Heart right ventricle (tissue), 16 donors: ENCODE measurements at regions of chr1 and their contacts with region 1.

Region 1: DNA sequence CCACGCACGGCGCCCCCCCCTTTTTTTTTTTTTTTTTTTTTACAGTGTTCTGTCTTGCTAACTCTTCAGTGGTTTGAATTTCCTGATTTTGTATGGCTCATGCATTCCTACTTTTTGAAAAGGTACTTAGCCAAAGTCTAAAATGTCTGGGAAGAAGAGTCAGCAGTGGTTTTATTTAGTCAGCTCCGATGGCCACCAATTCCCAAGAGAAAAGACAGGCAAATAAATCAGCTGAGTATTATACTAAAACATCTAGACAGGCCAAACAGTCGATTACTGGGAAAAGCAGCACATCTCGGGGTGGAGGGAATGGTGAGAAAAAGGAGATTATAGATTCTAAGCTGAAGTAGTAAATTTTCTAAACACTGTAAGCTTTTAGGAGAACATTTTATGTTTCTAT is 192.5 kb upstream of the ZRANB2 start:
- DNase-seq: no peak
- ATAC-seq: no peak
- H3K4me3 ChIP-seq: no peak overlapping the region
- H3K27ac ChIP-seq: no peak overlapping the region
- H3K4me1 ChIP-seq: no peaks in the 10 kb centered on the region
- H3K27me3 ChIP-seq: no peaks in the 10 kb centered on the region
- CTCF ChIP-seq: no peak

Region 2: DNA sequence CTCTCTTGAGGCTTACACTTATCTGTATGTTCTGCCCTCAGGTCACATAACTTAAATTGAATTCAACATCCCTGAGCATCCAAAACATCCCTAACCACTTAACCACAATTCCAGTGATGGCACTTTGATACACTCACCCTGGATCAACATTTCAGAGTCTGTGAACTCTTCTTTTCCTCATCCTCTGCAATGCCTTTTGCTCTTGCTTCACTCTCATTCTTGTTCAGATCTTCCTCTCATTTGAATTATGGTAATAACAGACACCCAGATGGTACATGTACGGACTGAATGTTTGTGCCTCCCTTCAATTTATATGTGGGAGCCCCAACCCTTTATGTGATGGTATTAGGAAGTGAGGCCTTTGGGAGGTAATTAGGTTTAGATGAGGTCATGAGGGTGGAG is 259.2 kb before region 1 on chr1:
- intact Hi-C with region 1: no loop called
- DNase-seq: no peak
- ATAC-seq: no peak
- H3K4me3 ChIP-seq: no peak overlapping the region
- H3K27ac ChIP-seq: no peak overlapping the region
- H3K4me1 ChIP-seq: peaks cover 0 to 3% (median 0%) of the 10 kb centered on the region in 9 donors
- H3K27me3 ChIP-seq: peaks cover 0 to 8% (median 0%) of the 10 kb centered on the region in 7 donors
- CTCF ChIP-seq: no peak

Region 3: GRCh38 chr1:71311376-71311775 is 38.0 kb after region 1 on chr1:
- intact Hi-C with region 1: loop called in 1 of 10 experiments (anchors 1 kb)
- DNase-seq: no peak
- ATAC-seq: no peak
- H3K4me3 ChIP-seq: no peak overlapping the region
- H3K27ac ChIP-seq: no peak overlapping the region
- H3K4me1 ChIP-seq: no peaks in the 10 kb centered on the region
- H3K27me3 ChIP-seq: no peaks in the 10 kb centered on the region
- CTCF ChIP-seq: no peak